Posterior vena cava (tissue), 2 donors: ENCODE measurements at regions of chr3 and their contacts with region 1.

Region 1: GRCh38 chr3:39138804-39139415 is 14.5 kb downstream of the CSRNP1 start:
- DNase-seq: no peak

Region 2: GRCh38 chr3:39154280-39155021 is 15.5 kb after region 1 on chr3:
- intact Hi-C with region 1: no loop called
- DNase-seq: no peak

Region 3: DNA sequence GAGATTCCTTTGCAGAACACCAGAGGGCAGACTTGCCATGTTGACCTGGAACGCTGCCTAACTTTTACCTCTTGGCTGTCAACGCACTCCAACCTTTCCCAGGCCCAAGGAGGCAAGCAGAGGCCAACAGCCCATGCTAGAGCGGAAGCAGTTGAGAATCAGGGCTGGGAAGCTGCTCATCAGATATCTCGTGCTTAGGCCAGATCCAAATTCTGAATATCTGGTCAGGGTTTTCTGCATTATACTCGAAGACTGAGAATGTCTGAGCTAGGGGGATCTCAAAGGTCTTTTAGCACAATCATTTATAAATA is 51.0 kb after region 1 on chr3:
- intact Hi-C with region 1: loop called in 1 of 2 experiments (anchors 5 kb)
- DNase-seq: no peak